WTC11 (cell line): ENCODE measurements at regions of chr17 and their contacts with region 1.

Region 1: GRCh38 chr17:1186923-1187771 is 7.4 kb upstream of the ABR start:
- DNase-seq: peak; percentile 90
- ATAC-seq: peak; percentile 94
- H3K4me3 Mint-ChIP-seq: peak overlapping the region; percentile 30; the same call in 1 of the 2 replicates
- H3K27ac Mint-ChIP-seq: no peak overlapping the region; the same call in 1 of the 2 replicates
- H3K4me1 Mint-ChIP-seq: peaks cover 14% of the 10 kb centered on the region
- H3K27me3 Mint-ChIP-seq: peaks cover 24% of the 10 kb centered on the region
- CTCF ChIP-seq: peak; percentile 92

Region 2: DNA sequence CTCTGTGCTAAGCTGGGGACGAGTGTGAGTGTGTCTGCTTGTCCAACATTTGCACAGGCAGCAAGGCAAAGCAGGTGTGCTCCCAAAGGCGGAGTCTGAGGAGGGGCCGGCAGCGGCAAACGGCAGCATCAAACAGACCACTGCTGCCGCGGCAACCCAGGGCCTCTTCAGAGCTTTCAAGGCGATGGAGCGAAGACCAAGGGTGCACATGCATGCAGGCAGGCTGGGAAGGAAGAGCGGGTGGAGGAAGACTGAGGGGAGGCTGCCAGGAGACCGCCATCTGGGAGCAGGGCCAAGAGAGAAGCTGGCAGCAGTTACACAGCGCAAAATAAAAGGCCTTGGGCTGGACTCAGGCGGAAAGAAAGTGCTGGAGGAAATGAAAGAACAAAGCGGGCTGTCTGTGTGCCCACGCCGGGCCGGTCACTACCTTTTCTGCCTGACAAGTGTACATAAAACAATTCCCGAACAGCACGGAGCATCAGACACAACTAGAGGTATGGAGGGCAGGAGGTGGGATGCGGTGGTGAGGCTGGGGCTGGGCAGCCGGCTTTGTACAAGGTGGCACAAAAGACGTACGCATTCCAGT is 181.7 kb before region 1 on chr17:
- CTCF ChIA-PET with region 1: no interaction called
- POLR2A ChIA-PET with region 1: no interaction called
- DNase-seq: no peak
- ATAC-seq: no peak; the same call in 1 of the 2 replicates
- H3K4me3 Mint-ChIP-seq: no peak overlapping the region
- H3K27ac Mint-ChIP-seq: peak overlapping the region; percentile 88
- H3K4me1 Mint-ChIP-seq: peaks cover 7% of the 10 kb centered on the region
- H3K27me3 Mint-ChIP-seq: no peaks in the 10 kb centered on the region
- CTCF ChIP-seq: no peak

Region 3: GRCh38 chr17:1137465-1137894 is 49.7 kb before region 1 on chr17:
- CTCF ChIA-PET with region 1: interaction called, 15 read pairs
- POLR2A ChIA-PET with region 1: no interaction called
- DNase-seq: peak; percentile 55
- ATAC-seq: peak; percentile 60; the same call in 1 of the 2 replicates
- H3K4me3 Mint-ChIP-seq: no peak overlapping the region
- H3K27ac Mint-ChIP-seq: peak overlapping the region; percentile 71
- H3K4me1 Mint-ChIP-seq: peaks cover 18% of the 10 kb centered on the region
- H3K27me3 Mint-ChIP-seq: no peaks in the 10 kb centered on the region
- CTCF ChIP-seq: no peak

Region 4: DNA sequence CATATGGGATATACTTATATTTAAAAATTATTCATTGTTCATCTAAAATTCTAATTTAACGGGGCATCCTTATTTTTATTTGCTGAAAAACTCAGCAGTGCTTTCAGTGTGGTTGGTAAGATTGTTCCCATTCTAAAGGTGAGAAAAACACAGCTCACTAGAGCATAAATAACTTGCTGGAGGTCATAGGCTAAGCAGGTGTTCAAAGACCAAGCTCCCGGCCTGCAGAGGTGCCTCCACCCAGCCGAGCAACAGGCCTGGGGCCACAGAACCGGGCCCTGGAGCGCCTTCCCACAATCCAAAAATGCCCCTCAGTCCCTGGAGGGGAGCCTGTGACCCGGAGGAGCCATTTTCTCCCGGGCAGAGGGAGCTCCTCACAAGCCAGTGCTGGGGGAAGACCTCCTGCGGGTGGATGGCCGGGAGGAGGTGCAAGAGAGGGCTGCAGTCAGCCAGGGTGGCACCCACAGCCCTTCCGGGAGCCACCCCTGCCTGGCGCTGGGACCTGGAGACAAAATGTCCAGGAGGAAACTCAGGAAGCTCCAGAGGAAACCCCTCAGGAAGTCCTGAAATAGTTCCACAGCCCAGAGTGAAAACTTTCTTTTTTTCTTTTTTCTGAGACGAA is 22.1 kb before region 1 on chr17:
- CTCF ChIA-PET with region 1: interaction called, 18 read pairs
- POLR2A ChIA-PET with region 1: interaction called, 5 read pairs
- DNase-seq: no peak
- ATAC-seq: no peak
- H3K4me3 Mint-ChIP-seq: no peak overlapping the region
- H3K27ac Mint-ChIP-seq: no peak overlapping the region
- H3K4me1 Mint-ChIP-seq: peaks cover 7% of the 10 kb centered on the region
- H3K27me3 Mint-ChIP-seq: no peaks in the 10 kb centered on the region
- CTCF ChIP-seq: no peak

Region 5: GRCh38 chr17:1197781-1198490 is 10.8 kb after region 1 on chr17:
- CTCF ChIA-PET with region 1: interaction called, 64 read pairs
- POLR2A ChIA-PET with region 1: interaction called, 4 read pairs
- DNase-seq: no peak
- ATAC-seq: no peak
- H3K4me3 Mint-ChIP-seq: no peak overlapping the region
- H3K27ac Mint-ChIP-seq: no peak overlapping the region
- H3K4me1 Mint-ChIP-seq: no peaks in the 10 kb centered on the region
- H3K27me3 Mint-ChIP-seq: peaks cover 20% of the 10 kb centered on the region
- CTCF ChIP-seq: no peak

Region 6: DNA sequence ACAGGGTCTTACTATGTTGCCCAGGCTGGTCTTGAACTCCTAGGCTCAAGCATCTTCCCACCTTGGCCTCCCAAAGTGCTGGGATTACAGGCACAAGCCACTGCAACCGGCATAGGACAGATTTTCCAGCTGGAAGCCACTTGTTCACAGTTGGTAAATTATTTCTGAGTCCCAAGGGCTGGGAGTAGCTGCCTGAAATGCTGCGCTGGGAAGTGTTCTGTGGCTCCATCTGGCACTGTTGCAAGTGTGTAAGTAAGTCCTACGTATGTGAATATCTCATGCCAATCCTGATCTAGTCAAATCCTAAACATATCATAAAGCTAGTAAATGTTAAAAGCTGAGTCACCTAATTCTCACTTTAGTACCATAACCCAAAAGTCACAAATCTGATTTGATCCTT is 164.8 kb after region 1 on chr17:
- CTCF ChIA-PET with region 1: no interaction called
- POLR2A ChIA-PET with region 1: no interaction called
- DNase-seq: no peak
- ATAC-seq: no peak
- H3K4me3 Mint-ChIP-seq: no peak overlapping the region
- H3K27ac Mint-ChIP-seq: no peak overlapping the region
- H3K4me1 Mint-ChIP-seq: peaks cover 11% of the 10 kb centered on the region
- H3K27me3 Mint-ChIP-seq: no peaks in the 10 kb centered on the region
- CTCF ChIP-seq: no peak